Activated CD4-positive, alpha-beta T cell treated with anti-CD3 and anti-CD28 coated beads, Interleukin-2, amount 10 ng/mL, durations not matched to agents 24 days and 14 days (primary cell): ENCODE measurements at regions of chr10 and their contacts with region 1.

Region 1: DNA sequence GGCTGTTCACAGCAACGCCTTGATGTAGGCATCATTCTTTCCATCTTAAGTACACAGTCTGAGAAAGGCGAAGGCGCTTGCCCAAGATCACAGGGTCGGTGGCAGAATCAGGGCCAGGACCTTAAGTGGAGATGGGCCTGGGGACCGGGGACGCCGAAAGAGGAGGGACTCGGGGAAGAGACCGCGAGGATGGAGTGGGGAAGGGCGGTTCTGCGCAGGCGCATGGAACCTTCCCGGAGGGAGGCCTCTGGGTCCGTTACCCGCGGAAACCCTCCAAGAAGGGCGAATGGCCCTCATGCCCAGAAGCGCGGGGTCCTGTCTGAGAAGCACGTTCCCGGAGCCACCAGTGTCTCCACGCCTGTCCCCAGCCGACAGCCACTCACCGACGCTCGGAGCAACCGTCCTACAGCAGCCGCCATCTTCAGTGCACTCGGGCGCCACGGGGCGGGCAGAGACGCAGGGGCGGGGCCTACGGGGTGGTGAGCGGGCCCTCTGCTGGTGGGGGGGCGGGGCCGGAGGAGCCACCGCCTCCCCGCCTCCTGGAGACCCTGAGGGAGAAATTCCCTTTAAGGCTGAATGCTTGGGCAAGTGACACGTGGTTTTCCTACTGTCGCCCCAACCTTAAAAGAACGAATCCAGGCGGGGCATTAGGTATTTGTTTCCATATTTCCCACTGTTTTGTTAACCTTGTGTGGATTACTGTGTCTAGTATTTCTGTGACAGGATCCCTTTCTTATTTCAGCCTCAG is at the start of gene PRDX3:
- DNase-seq: peak; percentile 98
- H3K4me3 Mint-ChIP-seq: peak within 1 kb of the TSS; percentile 98
- H3K27ac Mint-ChIP-seq: peak within 1 kb of the TSS; percentile 99
- H3K4me1 Mint-ChIP-seq: peaks cover 39% of the 10 kb centered on the region
- H3K27me3 Mint-ChIP-seq: no peaks in the 10 kb centered on the region
- total RNA-seq, gene PRDX3: 179 and 180 TPM in 2 replicates

Region 2: GRCh38 chr10:118698421-118698820 is 480.1 kb before region 1 on chr10:
- intact Hi-C with region 1: loop called (anchors 2 kb)
- DNase-seq: peak; percentile 92
- H3K4me3 Mint-ChIP-seq: peak overlapping the region; percentile 60
- H3K27ac Mint-ChIP-seq: peak overlapping the region; percentile 15
- H3K4me1 Mint-ChIP-seq: peaks cover 30% of the 10 kb centered on the region
- H3K27me3 Mint-ChIP-seq: no peaks in the 10 kb centered on the region

Region 3: DNA sequence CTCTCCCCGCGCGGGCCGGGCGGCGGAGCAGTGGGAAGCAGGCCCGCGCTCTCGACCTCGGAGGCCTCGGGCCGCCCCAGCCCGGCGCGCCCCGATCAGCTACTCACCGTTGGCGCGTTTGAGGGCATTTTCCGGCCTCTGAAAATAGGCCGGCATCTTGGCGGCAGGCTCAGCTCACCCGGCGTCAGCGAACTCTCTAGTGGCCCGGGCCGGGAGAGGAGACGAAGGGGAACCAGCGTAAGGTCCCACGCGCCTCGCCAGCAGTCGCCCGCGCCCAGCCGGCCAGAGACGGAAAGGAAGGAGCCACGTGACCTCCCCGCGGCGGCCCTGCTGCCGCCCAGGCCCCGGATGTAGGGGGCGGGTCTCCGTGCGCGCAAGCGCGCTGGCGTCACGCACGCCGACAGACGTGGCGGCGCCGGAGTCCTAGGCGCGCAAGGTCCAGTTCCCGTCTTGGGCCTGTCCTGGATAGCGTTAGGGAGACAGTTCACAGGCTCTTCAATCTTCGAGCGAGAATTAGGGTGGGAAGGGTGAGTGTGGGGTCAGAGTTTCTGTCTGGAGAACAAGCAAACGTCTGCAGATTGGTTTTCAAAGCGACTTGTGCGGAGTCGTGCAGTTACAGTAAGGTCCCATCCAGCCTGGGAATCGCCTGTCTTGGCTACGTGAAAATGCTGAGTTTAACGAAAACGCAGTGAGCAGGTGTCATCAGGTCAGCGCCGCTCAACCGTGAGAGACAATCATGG is 97.9 kb before region 1 on chr10 and contains the start of gene EIF3A:
- intact Hi-C with region 1: loop called (anchors 1 kb)
- DNase-seq: peak; percentile 99
- H3K4me3 Mint-ChIP-seq: peak within 1 kb of the TSS; percentile 87
- H3K27ac Mint-ChIP-seq: peak within 1 kb of the TSS; percentile 92
- H3K4me1 Mint-ChIP-seq: peaks cover 29% of the 10 kb centered on the region
- H3K27me3 Mint-ChIP-seq: no peaks in the 10 kb centered on the region
- total RNA-seq, gene EIF3A: 179 and 183 TPM in 2 replicates

Region 4: DNA sequence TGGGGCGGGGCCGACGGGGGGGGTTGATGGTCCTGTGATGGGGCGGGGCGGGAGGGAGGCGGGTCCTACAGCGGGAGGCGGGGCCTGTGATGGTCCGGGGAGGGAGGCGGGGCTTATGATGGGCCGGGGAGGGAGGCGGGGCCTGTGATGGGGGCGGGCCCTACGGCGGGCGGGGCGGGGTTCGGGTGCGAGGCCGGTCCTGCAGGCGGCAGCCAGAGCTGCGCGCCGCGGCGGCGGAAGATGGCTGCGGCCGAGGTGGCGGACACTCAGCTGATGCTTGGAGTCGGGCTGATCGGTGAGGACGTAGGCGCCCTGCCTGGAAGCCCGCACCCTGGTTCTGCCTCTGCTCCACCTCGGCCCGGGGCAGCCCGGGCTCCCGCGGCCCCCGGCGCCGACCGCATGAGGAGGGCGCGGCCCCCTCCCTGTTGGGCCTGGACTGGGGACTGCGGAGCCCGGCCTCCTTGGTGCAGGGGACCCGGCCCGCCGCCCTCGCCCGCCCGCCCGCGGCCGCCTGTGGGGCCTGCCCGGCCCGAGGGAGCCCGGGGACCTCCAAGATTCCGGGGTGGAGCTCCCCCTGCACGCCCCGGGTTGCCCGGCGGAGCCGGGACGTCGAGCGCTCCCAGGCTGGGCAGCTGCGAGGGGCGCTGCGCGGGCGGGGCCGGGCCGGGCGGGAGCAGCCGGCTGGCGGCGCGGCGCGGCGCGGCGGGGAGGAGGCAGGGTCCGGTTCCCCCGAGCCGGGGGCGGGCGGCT is 74.5 kb before region 1 on chr10 and contains the start of gene DENND10:
- intact Hi-C with region 1: loop called (anchors 1 kb)
- DNase-seq: peak; percentile 91
- H3K4me3 Mint-ChIP-seq: peak within 1 kb of the TSS; percentile 84
- H3K27ac Mint-ChIP-seq: peak within 1 kb of the TSS; percentile 66
- H3K4me1 Mint-ChIP-seq: peaks cover 29% of the 10 kb centered on the region
- H3K27me3 Mint-ChIP-seq: peaks cover 2% of the 10 kb centered on the region
- total RNA-seq, gene DENND10: 18.6 and 23.2 TPM in 2 replicates

Region 5: DNA sequence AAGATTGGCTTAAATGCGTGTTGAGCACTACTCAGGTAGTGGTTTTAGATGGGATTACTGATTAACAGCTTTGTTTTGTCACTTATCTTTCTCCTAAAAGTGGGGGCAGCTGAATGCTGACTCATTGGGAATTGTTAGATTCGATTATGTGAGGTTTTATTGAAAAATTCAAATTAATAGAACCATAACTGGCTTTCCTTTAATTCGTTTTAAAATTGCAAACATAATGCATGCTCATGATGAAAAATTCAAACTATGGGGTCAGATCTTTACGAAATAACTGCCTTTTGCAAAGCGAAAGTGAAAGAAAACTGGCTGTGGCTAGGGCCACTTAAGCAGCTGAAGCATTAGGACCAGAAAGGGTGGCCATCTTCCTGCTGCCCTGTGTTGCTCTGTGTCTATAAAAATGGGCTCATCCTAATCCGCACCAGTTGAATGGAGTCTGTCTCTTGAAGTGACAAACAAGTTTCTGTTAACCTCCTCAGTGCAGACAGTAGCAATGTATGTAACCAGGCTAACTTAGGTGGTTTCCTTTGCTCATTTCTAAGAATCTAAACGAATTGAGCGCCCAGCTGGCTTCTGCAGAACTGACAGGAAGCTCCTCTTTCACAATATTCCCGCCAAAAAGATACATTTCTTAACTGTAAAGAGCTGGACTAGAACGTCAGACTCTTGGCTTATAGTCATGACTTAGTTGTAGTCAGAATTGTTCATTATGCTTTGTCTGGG is 46.9 kb before region 1 on chr10:
- intact Hi-C with region 1: loop called (anchors 1 kb)
- DNase-seq: peak; percentile 89
- H3K4me3 Mint-ChIP-seq: peak overlapping the region; percentile 83
- H3K27ac Mint-ChIP-seq: peak overlapping the region; percentile 95
- H3K4me1 Mint-ChIP-seq: peaks cover 52% of the 10 kb centered on the region
- H3K27me3 Mint-ChIP-seq: no peaks in the 10 kb centered on the region

Region 6: GRCh38 chr10:119165171-119166110 is 13.1 kb before region 1 on chr10 and contains the start of gene SFXN4:
- intact Hi-C with region 1: loop called (anchors 1 kb)
- DNase-seq: peak; percentile 96
- H3K4me3 Mint-ChIP-seq: peak within 1 kb of the TSS; percentile 90
- H3K27ac Mint-ChIP-seq: peak within 1 kb of the TSS; percentile 95
- H3K4me1 Mint-ChIP-seq: peaks cover 35% of the 10 kb centered on the region
- H3K27me3 Mint-ChIP-seq: no peaks in the 10 kb centered on the region
- total RNA-seq, gene SFXN4: 58.1 and 63.0 TPM in 2 replicates

Region 7: DNA sequence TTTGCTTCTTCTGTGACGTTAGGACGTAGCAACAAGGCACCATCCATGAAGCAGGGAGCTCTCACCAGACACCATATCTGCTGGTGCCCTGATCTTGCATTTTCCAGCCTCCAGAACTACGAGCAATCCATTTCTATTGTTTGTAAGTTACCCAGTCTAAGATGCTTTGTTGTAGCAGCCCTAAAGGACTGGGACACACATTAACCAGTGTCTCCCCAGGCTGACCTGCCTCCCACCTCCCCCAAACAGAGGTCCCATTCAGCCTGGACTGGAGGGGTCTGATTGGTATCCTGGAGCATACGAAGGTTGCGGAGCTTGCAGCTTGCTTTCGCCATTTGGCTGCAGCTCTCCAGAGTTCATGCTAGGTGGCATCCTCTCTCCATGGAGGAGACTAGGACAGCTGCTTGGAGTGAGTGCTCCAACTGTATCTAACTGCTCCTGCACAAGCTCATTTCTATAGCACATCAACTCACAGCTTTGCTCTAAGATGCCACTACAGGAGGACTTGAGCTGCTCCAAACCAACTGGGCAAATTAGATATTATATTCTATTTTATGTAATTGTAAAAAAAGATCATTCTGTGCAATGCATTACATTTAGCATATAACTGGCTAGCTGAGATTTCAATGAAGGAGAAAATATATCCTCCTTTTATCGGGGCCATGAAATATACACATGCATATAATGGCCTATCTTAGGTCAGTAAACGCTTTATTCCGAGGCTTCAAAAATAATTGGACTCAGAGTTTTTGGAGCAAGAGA is 20.9 kb after region 1 on chr10:
- intact Hi-C with region 1: loop called (anchors 2 kb)
- DNase-seq: peak; percentile 86
- H3K4me3 Mint-ChIP-seq: peak overlapping the region; percentile 10
- H3K27ac Mint-ChIP-seq: no peak overlapping the region
- H3K4me1 Mint-ChIP-seq: peaks cover 34% of the 10 kb centered on the region
- H3K27me3 Mint-ChIP-seq: no peaks in the 10 kb centered on the region

Region 8: DNA sequence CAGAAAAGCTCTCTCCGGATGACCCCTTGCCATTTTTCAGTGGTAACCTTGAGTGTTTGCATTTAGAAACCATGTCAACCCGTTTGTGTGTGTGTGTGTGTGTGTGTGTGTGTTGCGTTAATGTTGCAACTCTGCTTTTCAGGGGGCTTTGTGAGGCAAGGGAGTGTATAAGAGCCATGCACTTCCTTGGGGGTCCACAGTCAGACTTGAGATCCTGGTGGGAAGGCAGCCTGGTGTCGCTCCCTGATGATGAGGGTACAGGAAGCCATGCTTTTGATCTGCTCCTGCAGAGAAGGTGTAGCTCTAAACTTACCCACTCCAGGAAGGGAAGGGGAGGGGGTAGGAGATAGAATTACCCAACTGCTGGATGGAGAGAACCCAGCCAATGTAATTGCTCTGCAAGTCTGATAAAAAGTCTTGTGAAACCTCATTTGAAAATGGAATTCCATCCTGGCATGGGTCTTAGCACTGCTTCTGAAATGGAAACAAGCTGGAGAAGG is 39.5 kb after region 1 on chr10:
- intact Hi-C with region 1: no loop called
- DNase-seq: no peak
- H3K4me3 Mint-ChIP-seq: no peak overlapping the region
- H3K27ac Mint-ChIP-seq: no peak overlapping the region
- H3K4me1 Mint-ChIP-seq: peaks cover 46% of the 10 kb centered on the region
- H3K27me3 Mint-ChIP-seq: no peaks in the 10 kb centered on the region